Activated CD8-positive, alpha-beta memory T cell treated with anti-CD3 and anti-CD28 coated beads, Interleukin-2, amount 10 ng/mL, durations not matched to agents 7 days and 5 days (primary cell): ENCODE measurements at regions of chr1 and their contacts with region 1.

Region 1: GRCh38 chr1:2044510-2045319 is 5.5 kb upstream of the PRKCZ start:
- DNase-seq: peak; percentile 77
- ATAC-seq: peak; percentile 84
- H3K4me3 Mint-ChIP-seq: peak overlapping the region; percentile 30
- H3K27ac Mint-ChIP-seq: no peak overlapping the region
- H3K4me1 Mint-ChIP-seq: peaks cover 16% of the 10 kb centered on the region
- H3K27me3 Mint-ChIP-seq: peaks cover 16% of the 10 kb centered on the region

Region 2: DNA sequence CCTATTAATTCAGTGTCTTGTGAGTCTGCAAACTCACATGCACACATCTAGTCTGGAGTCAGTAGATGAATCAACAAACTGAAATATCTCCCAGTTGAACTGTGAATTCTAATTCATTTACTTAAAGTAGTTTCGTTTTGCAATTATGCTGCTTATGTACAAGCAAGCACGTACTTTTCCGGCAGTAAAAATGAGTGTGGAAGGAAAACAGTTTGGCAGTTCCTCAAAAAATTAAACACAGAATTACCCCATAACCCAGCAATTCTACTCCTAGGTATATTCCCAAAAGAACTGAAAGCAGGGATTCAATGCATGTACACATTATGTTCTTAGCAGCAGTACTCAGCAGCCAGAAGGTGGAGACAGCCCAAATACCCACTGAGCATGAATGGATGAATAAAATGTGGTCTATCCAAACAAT is 203.1 kb before region 1 on chr1:
- CTCF ChIA-PET with region 1: no interaction called
- DNase-seq: no peak
- ATAC-seq: no peak
- H3K4me3 Mint-ChIP-seq: peak overlapping the region; percentile 4
- H3K27ac Mint-ChIP-seq: peak overlapping the region; percentile 64
- H3K4me1 Mint-ChIP-seq: peaks cover 27% of the 10 kb centered on the region
- H3K27me3 Mint-ChIP-seq: no peaks in the 10 kb centered on the region

Region 3: GRCh38 chr1:1943834-1944570 is 100.7 kb before region 1 on chr1:
- CTCF ChIA-PET with region 1: interaction called, 27 read pairs
- DNase-seq: peak; percentile 68
- ATAC-seq: peak; percentile 89
- H3K4me3 Mint-ChIP-seq: no peak overlapping the region
- H3K27ac Mint-ChIP-seq: no peak overlapping the region
- H3K4me1 Mint-ChIP-seq: peaks cover 2% of the 10 kb centered on the region
- H3K27me3 Mint-ChIP-seq: no peaks in the 10 kb centered on the region

Region 4: DNA sequence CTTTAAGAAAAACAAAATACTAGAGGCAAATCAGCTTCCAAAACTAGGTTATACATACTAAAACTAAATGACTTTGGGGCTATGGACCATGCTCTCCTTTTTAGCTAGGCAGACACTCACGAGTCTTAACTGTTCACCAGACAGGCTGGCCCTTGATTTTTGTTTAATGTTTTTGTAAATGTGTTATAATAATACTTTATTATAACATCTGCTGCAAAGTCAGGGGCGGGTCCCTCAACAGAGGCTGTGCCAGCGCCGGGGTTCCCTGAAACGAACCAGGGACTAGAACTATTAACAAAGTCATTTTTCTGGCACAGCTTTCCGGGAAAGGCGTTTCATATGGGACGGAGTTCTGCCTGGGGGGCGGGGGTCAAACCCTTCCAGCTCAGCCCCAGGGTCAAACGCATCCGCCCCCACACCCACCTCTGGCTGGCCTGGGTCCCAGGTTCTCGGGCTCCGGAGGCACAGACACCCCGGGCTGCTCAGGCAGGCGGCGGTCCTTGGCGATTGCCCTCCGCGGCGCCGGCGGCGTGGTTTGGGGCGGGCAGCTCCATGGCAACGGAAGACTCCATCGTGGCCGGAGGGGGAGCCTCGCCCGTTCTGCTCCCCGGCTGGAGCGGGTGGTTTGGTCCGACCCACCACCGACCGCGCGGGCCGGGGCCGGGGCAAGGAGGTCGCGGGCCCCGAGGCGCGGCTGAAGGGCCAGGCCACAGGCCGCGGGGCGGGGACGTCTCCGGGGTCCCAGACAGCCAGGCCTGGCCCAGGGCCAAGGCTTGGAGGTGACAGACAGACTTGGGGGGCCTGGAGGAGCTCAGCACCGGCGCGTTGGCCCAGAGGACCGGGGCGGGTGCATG is 41.2 kb before region 1 on chr1 and contains the start of gene CFAP74:
- CTCF ChIA-PET with region 1: interaction called, 10 read pairs
- DNase-seq: no peak
- ATAC-seq: no peak
- H3K4me3 Mint-ChIP-seq: no peak within 1 kb of the TSS
- H3K27ac Mint-ChIP-seq: no peak within 1 kb of the TSS
- H3K4me1 Mint-ChIP-seq: no peaks in the 10 kb centered on the region
- H3K27me3 Mint-ChIP-seq: peaks cover 44% of the 10 kb centered on the region
- total RNA-seq, gene CFAP74: not detected

Region 5: DNA sequence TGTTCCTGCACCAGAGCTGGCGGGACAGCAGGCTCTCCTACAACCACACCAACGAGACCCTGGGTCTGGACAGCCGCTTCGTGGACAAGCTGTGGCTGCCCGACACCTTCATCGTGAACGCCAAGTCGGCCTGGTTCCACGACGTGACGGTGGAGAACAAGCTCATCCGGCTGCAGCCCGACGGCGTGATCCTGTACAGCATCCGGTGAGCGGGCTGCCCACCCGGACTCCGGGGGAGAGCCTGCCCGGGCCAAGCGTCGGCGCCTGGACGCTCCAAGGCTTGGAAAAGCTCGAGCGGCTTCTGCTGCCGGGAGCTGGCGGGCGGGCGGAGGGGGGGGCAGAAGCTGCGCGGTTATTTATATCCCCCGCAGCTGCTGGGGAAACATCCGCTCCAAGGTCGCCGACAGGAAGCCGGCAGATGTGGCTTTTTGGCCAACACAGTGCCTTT is 19.2 kb before region 1 on chr1:
- CTCF ChIA-PET with region 1: interaction called, 14 read pairs
- DNase-seq: peak; percentile 52
- ATAC-seq: peak; percentile 64
- H3K4me3 Mint-ChIP-seq: no peak overlapping the region
- H3K27ac Mint-ChIP-seq: no peak overlapping the region
- H3K4me1 Mint-ChIP-seq: peaks cover 3% of the 10 kb centered on the region
- H3K27me3 Mint-ChIP-seq: peaks cover 8% of the 10 kb centered on the region

Region 6: DNA sequence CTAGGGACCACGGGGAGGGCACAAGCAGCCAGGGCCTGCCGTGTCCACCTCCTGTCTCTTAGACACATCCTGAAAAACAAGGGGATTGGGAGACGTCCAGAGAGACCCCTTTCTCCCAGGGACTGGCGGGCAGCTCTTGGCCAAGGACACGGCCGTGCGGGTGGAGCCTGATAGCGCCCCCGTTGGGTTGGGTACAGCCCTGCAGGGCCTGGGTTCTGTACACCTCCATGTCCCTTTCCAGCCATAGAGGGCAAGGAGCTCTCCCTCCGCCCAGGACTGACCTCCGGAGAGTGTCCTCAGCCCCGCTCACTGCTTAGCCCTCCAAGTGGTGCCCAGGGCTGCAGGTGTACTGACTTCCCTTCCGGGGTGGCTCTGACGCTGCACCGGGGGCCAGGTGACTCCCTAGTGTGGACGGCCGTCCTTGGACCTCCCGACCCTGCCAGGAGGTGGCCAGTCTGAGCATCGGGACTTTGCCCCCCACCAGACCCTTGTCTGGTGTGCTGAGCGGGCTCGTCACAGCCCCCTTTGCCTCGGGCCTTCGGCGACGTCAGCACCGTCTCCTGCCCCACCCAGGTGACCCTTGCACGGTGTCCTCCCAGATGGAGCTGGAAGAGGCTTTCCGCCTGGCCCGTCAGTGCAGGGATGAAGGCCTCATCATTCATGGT is 11.3 kb after region 1 on chr1:
- CTCF ChIA-PET with region 1: interaction called, 27 read pairs
- DNase-seq: no peak
- ATAC-seq: no peak
- H3K4me3 Mint-ChIP-seq: no peak overlapping the region
- H3K27ac Mint-ChIP-seq: no peak overlapping the region
- H3K4me1 Mint-ChIP-seq: no peaks in the 10 kb centered on the region
- H3K27me3 Mint-ChIP-seq: peaks cover 5% of the 10 kb centered on the region